Heart right ventricle (tissue), 16 donors: ENCODE measurements at regions of chr3 and their contacts with region 1.

Region 1: DNA sequence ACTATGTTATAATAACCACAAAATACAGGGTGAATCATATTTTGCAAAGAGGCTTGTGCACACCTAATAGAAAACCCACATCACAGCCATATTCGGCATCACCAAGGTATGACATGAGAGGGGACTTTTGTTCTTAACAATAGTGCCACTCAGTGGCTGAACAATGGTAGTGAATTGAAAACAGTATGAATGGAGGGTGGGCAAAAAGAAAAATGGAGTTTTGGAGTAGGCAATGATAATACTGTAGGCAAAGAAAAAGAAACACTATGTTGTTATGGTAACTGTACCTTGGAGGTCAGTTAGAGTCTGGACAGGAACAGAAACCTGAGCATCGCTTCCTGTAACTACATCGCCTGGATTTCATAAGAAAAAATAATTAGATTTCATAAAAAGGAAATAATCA is 348.6 kb downstream of the PLCL2 start:
- DNase-seq: peak in 1 of 2 donors; percentile 11
- ATAC-seq: peak; percentile 48 to 91 (median 82)
- H3K4me3 ChIP-seq: no peak overlapping the region
- H3K27ac ChIP-seq: no peak overlapping the region
- H3K4me1 ChIP-seq: peaks cover 0 to 35% (median 24%) of the 10 kb centered on the region in 9 donors
- H3K27me3 ChIP-seq: no peaks in the 10 kb centered on the region
- CTCF ChIP-seq: peak; percentile 40 to 84 (median 75)

Region 2: DNA sequence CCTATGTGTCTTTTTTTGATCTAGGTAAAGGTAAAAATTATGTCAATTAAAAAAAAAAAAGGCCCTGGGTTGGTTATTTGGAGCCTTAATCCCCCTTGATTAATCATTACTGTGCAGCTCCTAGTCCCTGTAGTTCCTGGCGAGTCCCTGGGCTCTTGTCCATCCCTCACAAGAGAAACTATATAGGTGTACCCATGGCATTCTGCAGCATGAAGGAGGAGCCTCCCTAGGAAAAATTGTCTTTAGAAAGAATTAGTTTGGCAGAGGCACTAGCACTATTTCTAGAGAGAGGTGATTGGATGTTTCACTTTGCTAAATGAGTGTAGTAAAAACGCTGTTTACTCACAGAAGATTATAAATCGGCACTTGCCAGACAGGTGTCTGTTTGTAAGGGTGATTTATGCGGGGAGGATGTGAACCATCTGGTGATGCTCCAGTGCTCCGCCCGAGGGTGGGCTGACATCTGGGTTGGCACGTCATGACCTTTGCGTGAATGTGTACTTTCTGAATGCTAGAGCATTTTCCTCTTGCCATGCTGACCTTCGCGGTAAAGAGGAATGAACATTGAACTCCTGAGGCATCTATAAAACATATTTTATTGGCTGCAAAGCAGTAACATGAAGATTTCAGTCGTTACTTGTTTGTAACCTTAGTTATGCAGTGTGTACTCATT is 336.0 kb before region 1 on chr3:
- intact Hi-C with region 1: loop called in 1 of 10 experiments (anchors 10 kb)
- DNase-seq: no peak
- ATAC-seq: no peak
- H3K4me3 ChIP-seq: peak overlapping the region in 4 of 10 donors; percentile 0 to 17 (median 10)
- H3K27ac ChIP-seq: peak overlapping the region; percentile 37 to 84 (median 60)
- H3K4me1 ChIP-seq: peaks cover 0 to 71% (median 55%) of the 10 kb centered on the region in 9 donors
- H3K27me3 ChIP-seq: no peaks in the 10 kb centered on the region
- CTCF ChIP-seq: no peak

Region 3: GRCh38 chr3:17023006-17023664 is 210.3 kb before region 1 on chr3:
- intact Hi-C with region 1: loop called in 1 of 10 experiments (anchors 10 kb)
- DNase-seq: no peak
- ATAC-seq: peak in 6 of 8 donors; percentile 32 to 82 (median 53)
- H3K4me3 ChIP-seq: no peak overlapping the region
- H3K27ac ChIP-seq: peak overlapping the region in 1 of 10 donors; percentile 29
- H3K4me1 ChIP-seq: peaks cover 0 to 18% (median 5%) of the 10 kb centered on the region in 9 donors
- H3K27me3 ChIP-seq: no peaks in the 10 kb centered on the region
- CTCF ChIP-seq: no peak

Region 4: GRCh38 chr3:17032407-17033034 is 200.9 kb before region 1 on chr3:
- intact Hi-C with region 1: loop called in 4 of 10 experiments (anchors 10 kb)
- DNase-seq: no peak
- ATAC-seq: peak in 7 of 8 donors; percentile 37 to 84 (median 66)
- H3K4me3 ChIP-seq: no peak overlapping the region
- H3K27ac ChIP-seq: no peak overlapping the region
- H3K4me1 ChIP-seq: peaks cover 0 to 37% (median 3%) of the 10 kb centered on the region in 9 donors
- H3K27me3 ChIP-seq: no peaks in the 10 kb centered on the region
- CTCF ChIP-seq: peak; percentile 45 to 77 (median 64)

Region 5: GRCh38 chr3:17190353-17191078 is 42.9 kb before region 1 on chr3:
- intact Hi-C with region 1: loop called in 1 of 10 experiments (anchors 5 kb)
- DNase-seq: no peak
- ATAC-seq: peak in 7 of 8 donors; percentile 46 to 79 (median 63)
- H3K4me3 ChIP-seq: no peak overlapping the region
- H3K27ac ChIP-seq: peak overlapping the region in 5 of 10 donors; percentile 4 to 47 (median 31)
- H3K4me1 ChIP-seq: peaks cover 0 to 52% (median 34%) of the 10 kb centered on the region in 9 donors
- H3K27me3 ChIP-seq: no peaks in the 10 kb centered on the region
- CTCF ChIP-seq: no peak

Region 6: GRCh38 chr3:17300441-17300840 is 67.0 kb after region 1 on chr3:
- intact Hi-C with region 1: no loop called
- DNase-seq: no peak
- ATAC-seq: no peak
- H3K4me3 ChIP-seq: no peak overlapping the region
- H3K27ac ChIP-seq: no peak overlapping the region
- H3K4me1 ChIP-seq: peaks cover 0 to 16% (median 6%) of the 10 kb centered on the region in 9 donors
- H3K27me3 ChIP-seq: no peaks in the 10 kb centered on the region
- CTCF ChIP-seq: no peak